ENCODE measurements at regions of chr18 and their contacts with region 1.

Region 1: DNA sequence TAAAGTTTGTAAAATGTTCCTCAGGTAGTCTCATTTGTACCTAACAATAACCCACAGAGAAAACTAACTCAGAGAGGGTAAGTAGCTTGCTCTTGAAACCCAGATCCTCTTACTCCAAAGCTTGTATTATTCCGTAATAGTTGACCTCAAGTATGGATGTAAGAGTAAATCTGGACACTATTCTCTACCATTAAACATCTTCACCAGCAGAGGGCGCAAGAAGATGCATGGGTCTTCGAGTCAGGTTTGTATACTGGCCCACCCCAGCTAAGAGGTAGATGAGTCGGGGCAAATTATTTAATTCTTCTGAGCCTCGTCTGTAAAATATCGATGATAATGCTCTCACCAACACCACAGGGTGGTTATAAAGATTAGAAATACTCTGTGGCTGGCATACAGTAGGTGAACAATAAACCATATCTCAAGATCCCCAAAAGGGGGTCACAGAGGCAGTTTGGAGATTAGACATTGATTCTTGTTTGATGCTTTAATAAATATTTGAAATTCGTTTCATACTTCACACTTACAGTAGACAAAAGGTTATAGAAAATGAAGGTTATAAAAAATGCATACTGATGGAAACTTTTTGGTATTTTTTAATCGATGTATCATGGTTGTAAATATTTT is 3.5 kb upstream of the CABLES1 start:
- DNase-seq: no peak
- ATAC-seq: peak; percentile 80

Region 2: DNA sequence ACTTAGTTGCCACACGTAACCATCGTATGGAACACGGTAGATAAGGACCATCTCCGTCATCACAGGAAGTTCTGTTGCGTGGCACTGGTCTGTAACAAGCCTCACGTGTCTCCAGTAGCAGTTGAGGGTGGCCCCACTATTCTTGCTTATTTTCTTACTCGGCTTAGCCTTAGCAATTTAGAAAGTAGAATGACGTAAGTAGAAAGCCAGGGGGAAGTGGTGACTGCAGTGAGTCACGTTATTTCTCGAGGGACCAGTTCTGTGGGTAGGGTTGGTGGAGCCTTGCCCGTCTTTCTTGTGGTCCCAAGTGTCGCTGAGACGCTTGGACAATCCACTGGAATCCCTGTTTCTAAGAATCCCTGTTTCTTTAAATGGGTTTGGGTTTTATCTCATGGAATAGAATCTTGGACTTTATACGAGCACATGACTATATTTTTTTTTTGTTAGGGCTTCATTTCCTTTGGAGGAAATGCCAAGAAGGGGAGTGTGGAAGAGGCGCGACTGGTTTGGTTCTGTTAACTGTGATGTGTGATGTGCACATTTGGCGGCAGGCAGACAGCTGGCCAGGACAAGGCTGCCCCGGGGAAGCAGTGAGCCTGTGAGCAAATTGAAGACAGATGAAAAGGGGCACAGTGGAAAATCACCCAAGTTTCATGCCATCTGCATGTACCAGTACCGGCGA is 99.7 kb after region 1 on chr18:
- intact Hi-C with region 1: loop called (anchors 10 kb)
- DNase-seq: no peak
- ATAC-seq: peak; percentile 83

Region 3: GRCh38 chr18:23377669-23378301 is 246.0 kb after region 1 on chr18:
- intact Hi-C with region 1: loop called (anchors 10 kb)
- DNase-seq: no peak
- ATAC-seq: peak; percentile 68

Region 4: GRCh38 chr18:23412351-23412964 is 280.7 kb after region 1 on chr18:
- intact Hi-C with region 1: loop called (anchors 2 kb)
- DNase-seq: no peak
- ATAC-seq: no peak